IMR-90 (cell line): ENCODE measurements at regions of chr2 and their contacts with region 1.

Region 1: DNA sequence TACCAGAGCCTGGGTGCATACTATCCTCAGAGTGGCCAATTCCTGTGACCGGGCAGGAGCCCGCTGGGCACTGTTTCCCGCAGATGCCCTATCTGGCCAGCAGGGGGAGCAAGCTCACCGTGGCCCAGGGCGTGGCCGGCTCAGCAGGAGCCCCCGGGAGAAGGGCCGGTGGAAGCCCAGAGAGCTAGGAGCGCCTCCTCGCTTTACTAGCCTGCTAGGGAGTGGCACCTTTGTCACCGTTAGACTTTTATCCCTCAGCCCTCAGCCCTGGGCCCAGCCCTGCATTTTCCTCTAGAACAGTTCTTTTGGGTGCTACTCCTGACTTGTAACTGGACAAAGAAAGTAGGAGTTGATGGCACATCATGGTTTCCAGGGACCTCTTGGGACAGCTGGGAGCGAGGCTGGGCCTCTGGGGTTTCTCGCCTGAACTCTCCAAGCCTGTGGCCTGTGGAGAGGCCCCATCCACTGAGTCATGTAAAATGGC is 24.0 kb downstream of the TMEM177 start:
- DNase-seq: peak; percentile 46
- ATAC-seq: peak; percentile 99
- H3K4me3 ChIP-seq: no peak overlapping the region
- H3K27ac ChIP-seq: no peak overlapping the region
- H3K4me1 ChIP-seq: no peaks in the 10 kb centered on the region
- H3K27me3 ChIP-seq: peaks cover 14% of the 10 kb centered on the region; the same call in 1 of the 2 replicates
- CTCF ChIP-seq: peak; percentile 91
- POLR2A ChIP-seq: no peak
- RAD21 ChIP-seq: peak; percentile 91

Region 2: DNA sequence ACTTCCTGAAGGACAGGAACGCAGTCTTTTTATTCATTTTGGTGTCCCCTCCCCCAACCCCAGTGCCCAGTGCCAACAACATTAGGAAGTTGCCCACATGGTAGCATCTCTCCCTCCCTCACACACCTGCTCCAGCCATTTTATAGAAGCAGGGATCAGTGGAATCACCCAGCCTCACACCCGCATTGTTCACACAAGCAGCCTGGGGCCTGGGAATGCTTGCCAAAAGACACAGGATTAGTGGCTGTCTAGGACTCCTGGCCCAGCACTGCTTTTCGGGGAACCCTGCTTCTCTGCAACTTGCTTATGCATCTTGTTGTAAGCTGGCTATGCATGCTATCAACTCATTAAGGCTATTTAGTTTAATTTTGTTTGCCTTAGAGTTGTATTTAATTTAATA is 253.4 kb before region 1 on chr2:
- CTCF ChIA-PET with region 1: no interaction called
- POLR2A ChIA-PET with region 1: no interaction called
- dilution Hi-C with region 1: no loop called
- in situ Hi-C with region 1: no loop called
- intact Hi-C with region 1: no loop called
- DNase-seq: no peak
- ATAC-seq: no peak
- H3K4me3 ChIP-seq: no peak overlapping the region
- H3K27ac ChIP-seq: no peak overlapping the region
- H3K4me1 ChIP-seq: no peaks in the 10 kb centered on the region
- H3K27me3 ChIP-seq: peaks cover 10% of the 10 kb centered on the region
- CTCF ChIP-seq: no peak
- POLR2A ChIP-seq: no peak
- RAD21 ChIP-seq: no peak

Region 3: DNA sequence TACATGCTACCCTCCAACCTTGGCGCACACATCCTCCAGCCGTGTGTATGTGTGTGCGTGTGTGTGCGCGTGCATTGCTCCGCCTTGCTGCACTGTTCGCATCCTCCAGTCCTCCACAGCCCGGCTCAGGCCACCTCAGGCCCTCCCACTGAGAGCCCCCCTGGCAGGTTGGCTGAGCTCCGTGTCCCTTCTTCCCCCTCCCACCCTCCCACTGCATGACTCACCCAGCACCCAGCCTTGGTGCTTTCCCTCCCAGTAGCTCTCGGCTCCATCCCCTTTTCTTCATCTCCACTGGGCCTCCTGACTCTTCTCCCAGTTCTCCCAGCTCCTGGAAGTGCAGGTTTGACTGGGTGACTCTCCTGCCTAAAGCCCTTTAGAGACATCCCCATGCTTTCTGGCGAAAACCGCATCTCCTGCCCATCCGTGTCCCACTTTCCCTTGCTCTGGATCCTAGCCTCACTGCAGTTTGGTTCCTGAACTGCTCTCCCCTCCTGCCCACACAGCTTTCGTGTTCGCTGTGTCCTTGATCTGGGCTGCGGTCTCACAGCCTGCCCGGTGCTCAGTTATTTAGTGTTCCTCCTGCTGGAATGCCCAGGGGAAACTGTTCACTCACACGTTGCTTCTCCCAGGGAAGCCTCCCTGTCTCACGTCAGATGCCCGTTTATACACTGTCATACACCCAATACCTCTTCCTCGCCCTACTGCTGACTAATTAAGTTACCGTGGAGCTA is 19.1 kb before region 1 on chr2:
- CTCF ChIA-PET with region 1: no interaction called
- POLR2A ChIA-PET with region 1: no interaction called
- dilution Hi-C with region 1: no loop called
- in situ Hi-C with region 1: no loop called
- intact Hi-C with region 1: no loop called
- DNase-seq: peak; percentile 28
- ATAC-seq: peak; percentile 9; the same call in 1 of the 2 replicates
- H3K4me3 ChIP-seq: no peak overlapping the region
- H3K27ac ChIP-seq: no peak overlapping the region
- H3K4me1 ChIP-seq: peaks cover 5% of the 10 kb centered on the region; the same call in 1 of the 2 replicates
- H3K27me3 ChIP-seq: no peaks in the 10 kb centered on the region
- CTCF ChIP-seq: no peak
- POLR2A ChIP-seq: no peak
- RAD21 ChIP-seq: no peak

Region 4: DNA sequence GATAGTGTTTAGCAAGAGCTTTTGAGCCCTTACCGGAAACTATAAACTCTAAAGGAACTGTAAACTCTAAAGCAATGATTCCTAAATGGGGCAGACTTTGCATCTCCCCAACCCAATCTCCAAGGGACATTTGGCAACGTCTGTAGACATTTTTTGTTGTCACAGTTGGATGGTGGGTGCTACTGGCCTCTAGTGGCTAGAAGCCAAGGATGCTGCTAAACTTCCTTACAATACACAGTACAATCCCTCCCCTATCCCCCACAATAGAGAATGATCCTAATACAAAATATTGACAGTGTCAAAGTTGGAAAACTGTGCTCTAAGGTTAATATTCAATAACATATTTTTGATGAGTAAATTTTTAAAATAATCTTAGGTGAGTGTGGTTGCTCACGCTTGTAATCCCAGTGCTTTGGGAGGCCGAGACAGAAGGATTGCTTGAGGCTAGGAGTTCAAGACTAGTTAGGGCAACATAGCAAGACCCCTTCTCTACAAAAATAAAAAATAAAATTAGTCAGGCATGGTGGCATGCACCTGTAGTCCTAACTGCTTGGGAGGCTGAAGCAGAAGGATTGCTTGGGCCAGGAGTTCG is 123.5 kb after region 1 on chr2:
- CTCF ChIA-PET with region 1: interaction called, 3 read pairs
- POLR2A ChIA-PET with region 1: no interaction called
- dilution Hi-C with region 1: no loop called
- in situ Hi-C with region 1: no loop called
- intact Hi-C with region 1: loop called (anchors 1 kb)
- DNase-seq: peak; percentile 21
- ATAC-seq: peak; percentile 50; the same call in 1 of the 2 replicates
- H3K4me3 ChIP-seq: no peak overlapping the region
- H3K27ac ChIP-seq: no peak overlapping the region
- H3K4me1 ChIP-seq: peaks cover 4% of the 10 kb centered on the region
- H3K27me3 ChIP-seq: no peaks in the 10 kb centered on the region
- CTCF ChIP-seq: peak; percentile 50
- POLR2A ChIP-seq: no peak
- RAD21 ChIP-seq: peak; percentile 56

Region 5: GRCh38 chr2:119888680-119889079 is 185.7 kb after region 1 on chr2:
- CTCF ChIA-PET with region 1: no interaction called
- POLR2A ChIA-PET with region 1: no interaction called
- dilution Hi-C with region 1: no loop called
- in situ Hi-C with region 1: no loop called
- intact Hi-C with region 1: no loop called
- DNase-seq: peak; percentile 92
- ATAC-seq: peak; percentile 92
- H3K4me3 ChIP-seq: no peak overlapping the region
- H3K27ac ChIP-seq: no peak overlapping the region
- H3K4me1 ChIP-seq: peaks cover 2% of the 10 kb centered on the region; the same call in 1 of the 2 replicates
- H3K27me3 ChIP-seq: no peaks in the 10 kb centered on the region
- CTCF ChIP-seq: no peak
- POLR2A ChIP-seq: no peak
- RAD21 ChIP-seq: no peak

Region 6: DNA sequence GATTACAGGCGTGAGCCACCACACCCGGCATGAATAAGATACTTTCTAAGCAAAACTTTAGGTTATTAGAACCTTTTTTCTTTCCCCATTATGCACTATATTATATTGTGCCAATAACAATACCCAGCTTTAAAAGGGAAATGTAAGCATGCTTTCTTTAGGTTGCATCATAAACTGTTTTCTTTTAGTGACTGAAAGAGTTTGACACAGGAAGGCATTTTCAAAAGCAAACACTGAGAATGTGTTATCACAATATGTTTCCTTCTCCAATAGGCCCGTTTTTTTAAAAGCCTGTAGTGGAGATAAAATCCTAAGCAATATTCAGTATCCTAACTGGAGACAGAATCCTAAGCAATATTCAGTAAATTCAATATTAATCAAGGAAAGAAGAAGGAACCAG is 293.2 kb after region 1 on chr2:
- CTCF ChIA-PET with region 1: no interaction called
- POLR2A ChIA-PET with region 1: no interaction called
- dilution Hi-C with region 1: no loop called
- in situ Hi-C with region 1: no loop called
- intact Hi-C with region 1: no loop called
- DNase-seq: peak; percentile 20
- ATAC-seq: no peak
- H3K4me3 ChIP-seq: no peak overlapping the region
- H3K27ac ChIP-seq: no peak overlapping the region
- H3K4me1 ChIP-seq: no peaks in the 10 kb centered on the region
- H3K27me3 ChIP-seq: no peaks in the 10 kb centered on the region
- CTCF ChIP-seq: no peak
- POLR2A ChIP-seq: no peak
- RAD21 ChIP-seq: no peak